A673 (cell line): ENCODE measurements at regions of chr9 and their contacts with region 1.

Region 1: DNA sequence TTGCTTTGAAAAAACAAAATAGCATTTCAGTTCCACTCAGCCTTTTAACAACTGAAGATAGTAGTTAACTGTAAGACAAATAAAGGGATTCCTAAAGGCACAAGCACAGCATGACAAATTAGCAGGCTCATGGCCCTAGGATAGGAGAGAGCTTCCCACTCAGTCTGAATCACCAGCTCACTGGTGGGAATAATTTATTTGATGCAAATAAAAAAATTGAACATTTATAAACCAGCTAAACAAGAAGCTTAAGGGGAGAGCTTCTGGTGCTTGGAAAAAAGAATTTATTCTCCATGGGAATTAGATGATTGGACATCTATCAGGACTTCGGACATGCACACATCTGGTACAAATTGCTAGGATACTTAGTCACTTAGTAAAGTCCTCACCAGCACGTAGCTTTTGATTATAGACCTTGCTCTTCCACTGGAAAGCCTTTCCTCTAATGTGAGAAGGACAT is 294.1 kb upstream of the TNC start:
- DNase-seq: peak; percentile 75
- H3K4me3 ChIP-seq: no peak overlapping the region
- H3K27ac ChIP-seq: peak overlapping the region; percentile 99
- H3K4me1 ChIP-seq: peaks cover 56% of the 10 kb centered on the region
- H3K27me3 ChIP-seq: no peaks in the 10 kb centered on the region
- CTCF ChIP-seq: no peak

Region 2: GRCh38 chr9:115117999-115118878 is 293.8 kb before region 1 on chr9 and contains the start of gene TNC:
- CTCF ChIA-PET with region 1: no interaction called
- POLR2A ChIA-PET with region 1: no interaction called
- intact Hi-C with region 1: loop called (anchors 2 kb)
- DNase-seq: peak; percentile 96
- H3K4me3 ChIP-seq: peak within 1 kb of the TSS; percentile 52
- H3K27ac ChIP-seq: peak within 1 kb of the TSS; percentile 82
- H3K4me1 ChIP-seq: peaks cover 36% of the 10 kb centered on the region
- H3K27me3 ChIP-seq: no peaks in the 10 kb centered on the region
- CTCF ChIP-seq: no peak
- total RNA-seq, gene TNC: 202 and 206 TPM in 2 replicates

Region 3: DNA sequence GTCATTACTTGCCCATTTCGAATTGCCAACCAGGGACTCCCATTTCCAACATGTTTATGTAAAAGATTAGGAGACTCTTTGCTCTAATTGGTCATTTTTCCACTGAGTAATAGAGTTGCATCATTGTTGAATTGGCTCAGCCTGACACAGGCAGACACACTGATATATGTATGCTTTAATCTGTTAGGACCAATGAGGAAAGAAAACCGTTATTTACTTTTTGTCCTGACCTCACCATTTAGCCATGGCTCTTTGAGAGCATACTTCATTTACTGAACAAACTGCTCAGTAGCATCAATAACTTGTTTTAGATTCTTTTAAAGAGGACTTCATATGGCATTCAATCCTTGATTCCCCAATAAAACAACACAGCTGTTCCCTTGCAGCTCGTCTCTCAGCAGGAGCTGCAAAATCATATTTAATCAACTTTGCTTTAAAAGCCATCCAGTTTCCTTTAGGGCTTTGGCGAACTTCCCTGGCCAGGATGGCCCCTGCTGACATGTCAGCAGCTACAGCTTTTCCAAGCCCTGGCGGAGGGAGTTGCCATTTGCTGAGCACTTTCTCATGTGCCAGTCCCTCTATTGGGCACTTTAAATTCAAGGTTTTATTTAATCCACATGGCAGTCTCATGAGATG is 42.6 kb before region 1 on chr9:
- CTCF ChIA-PET with region 1: no interaction called
- POLR2A ChIA-PET with region 1: no interaction called
- intact Hi-C with region 1: loop called (anchors 2 kb)
- DNase-seq: peak; percentile 96
- H3K4me3 ChIP-seq: no peak overlapping the region
- H3K27ac ChIP-seq: peak overlapping the region; percentile 93
- H3K4me1 ChIP-seq: peaks cover 44% of the 10 kb centered on the region
- H3K27me3 ChIP-seq: no peaks in the 10 kb centered on the region
- CTCF ChIP-seq: peak; percentile 14; the same call in 1 of the 2 replicates

Region 4: DNA sequence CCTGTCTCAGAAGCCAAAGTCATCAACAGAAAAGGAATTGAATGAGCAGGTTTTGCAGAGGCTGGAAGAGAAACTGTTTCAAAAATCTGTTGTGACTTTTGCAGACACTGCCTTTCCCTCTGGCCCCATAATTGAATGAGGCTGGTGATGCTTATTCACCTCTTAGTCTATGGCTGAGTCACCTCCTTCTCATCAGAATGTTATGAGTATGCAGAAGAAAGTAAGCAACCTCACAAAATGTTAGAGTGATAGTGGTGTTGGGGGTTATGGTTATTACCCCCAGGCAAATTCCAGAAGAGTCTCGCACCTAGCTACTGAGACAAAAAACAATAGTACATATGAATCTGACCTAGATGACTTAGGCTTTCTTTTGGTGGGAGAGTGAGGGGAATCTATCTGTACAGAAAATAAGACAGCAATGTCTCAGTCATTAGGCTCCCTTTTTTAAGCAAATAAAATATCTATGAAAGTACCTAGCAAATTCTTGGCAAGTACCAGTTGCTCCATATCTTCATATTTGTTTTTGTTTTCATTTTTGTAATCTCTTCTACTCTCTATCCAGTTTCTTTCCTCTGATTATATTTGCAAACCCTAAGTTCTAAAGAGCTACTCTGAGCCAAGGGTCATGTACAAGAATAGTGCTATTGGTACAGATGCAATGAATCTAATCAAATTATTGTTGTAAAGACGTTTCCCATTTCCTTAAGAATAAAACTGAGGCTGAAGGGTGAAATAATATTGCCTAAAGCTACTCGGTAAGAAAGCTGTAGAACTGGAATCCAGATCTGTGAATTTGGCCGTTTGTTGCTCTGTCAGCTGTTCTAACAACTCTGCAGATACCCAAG is 204.0 kb after region 1 on chr9:
- CTCF ChIA-PET with region 1: interaction called, 3 read pairs
- POLR2A ChIA-PET with region 1: no interaction called
- intact Hi-C with region 1: loop called (anchors 1 kb)
- DNase-seq: peak; percentile 55
- H3K4me3 ChIP-seq: no peak overlapping the region
- H3K27ac ChIP-seq: peak overlapping the region; percentile 98
- H3K4me1 ChIP-seq: peaks cover 54% of the 10 kb centered on the region
- H3K27me3 ChIP-seq: no peaks in the 10 kb centered on the region
- CTCF ChIP-seq: no peak

Region 5: DNA sequence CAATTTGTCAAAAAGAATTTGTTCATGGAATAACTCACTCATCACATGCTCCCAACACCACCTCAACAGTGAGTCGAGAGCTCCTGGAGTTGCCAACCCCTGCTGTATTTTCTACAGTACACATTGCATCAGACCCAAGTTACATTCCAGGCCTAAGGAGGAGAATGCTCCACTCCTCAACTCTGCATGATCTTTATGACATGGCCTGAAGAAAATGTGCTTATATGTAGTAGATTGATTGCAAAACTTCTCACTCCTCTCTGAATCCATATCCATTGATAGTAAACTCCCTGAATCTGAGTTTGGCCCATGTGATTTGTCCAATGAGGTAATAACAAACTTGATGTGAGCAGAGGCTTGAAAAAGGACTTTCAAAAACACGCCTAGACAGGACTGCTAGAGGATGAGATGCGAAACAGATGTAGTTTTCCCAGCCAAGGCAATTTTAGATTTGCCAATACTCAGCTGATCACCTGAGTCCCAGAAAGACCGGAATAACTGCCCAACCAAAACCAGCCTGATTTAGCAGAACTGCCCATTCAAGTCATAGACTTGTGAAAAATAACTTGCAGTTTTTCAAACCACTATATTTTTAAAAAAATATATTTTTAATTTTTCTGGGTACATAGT is 712.6 kb after region 1 on chr9:
- CTCF ChIA-PET with region 1: no interaction called
- POLR2A ChIA-PET with region 1: no interaction called
- intact Hi-C with region 1: no loop called
- DNase-seq: no peak
- H3K4me3 ChIP-seq: no peak overlapping the region
- H3K27ac ChIP-seq: peak overlapping the region; percentile 85
- H3K4me1 ChIP-seq: peaks cover 21% of the 10 kb centered on the region
- H3K27me3 ChIP-seq: no peaks in the 10 kb centered on the region
- CTCF ChIP-seq: no peak

Region 6: GRCh38 chr9:116144038-116144437 is 732.0 kb after region 1 on chr9:
- CTCF ChIA-PET with region 1: no interaction called
- POLR2A ChIA-PET with region 1: no interaction called
- intact Hi-C with region 1: loop called (anchors 5 kb)
- DNase-seq: no peak
- H3K4me3 ChIP-seq: no peak overlapping the region
- H3K27ac ChIP-seq: peak overlapping the region; percentile 83
- H3K4me1 ChIP-seq: peaks cover 62% of the 10 kb centered on the region
- H3K27me3 ChIP-seq: no peaks in the 10 kb centered on the region
- CTCF ChIP-seq: no peak